ENCODE measurements at regions of chr2 and their contacts with region 1.

Region 1: DNA sequence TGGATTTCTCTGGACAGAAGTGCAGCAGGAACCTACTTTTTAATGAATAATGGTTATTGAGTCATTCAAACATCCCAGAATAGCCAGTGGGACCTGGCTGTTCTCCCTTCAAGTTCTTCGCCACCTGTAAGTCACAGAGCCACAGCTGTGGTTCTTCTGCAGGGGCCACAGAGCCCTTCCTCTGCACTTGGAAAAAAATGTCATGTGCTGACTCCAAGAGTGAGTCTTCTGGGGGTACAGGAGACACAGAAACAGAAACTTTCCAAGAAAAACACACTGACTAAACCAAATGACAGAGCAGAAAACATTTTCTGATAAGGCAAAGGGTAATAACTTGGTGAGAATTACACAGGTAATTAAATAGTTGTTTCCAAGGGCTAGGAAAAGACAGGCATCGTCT is 68.7 kb upstream of the FN1 start:
- DNase-seq: peak; percentile 61
- H3K4me3 ChIP-seq: no peak overlapping the region
- H3K27ac ChIP-seq: no peak overlapping the region
- H3K4me1 ChIP-seq: peaks cover 31% of the 10 kb centered on the region
- H3K27me3 ChIP-seq: no peaks in the 10 kb centered on the region
- CTCF ChIP-seq: no peak
- POLR2A ChIP-seq: no peak

Region 2: GRCh38 chr2:215466097-215466909 is 38.2 kb before region 1 on chr2:
- CTCF ChIA-PET with region 1: no interaction called
- POLR2A ChIA-PET with region 1: no interaction called
- dilution Hi-C with region 1: no loop called
- intact Hi-C with region 1: loop called (anchors 5 kb)
- DNase-seq: no peak
- H3K4me3 ChIP-seq: no peak overlapping the region
- H3K27ac ChIP-seq: no peak overlapping the region
- H3K4me1 ChIP-seq: peaks cover 26% of the 10 kb centered on the region
- H3K27me3 ChIP-seq: no peaks in the 10 kb centered on the region
- CTCF ChIP-seq: no peak
- POLR2A ChIP-seq: no peak

Measured in endothelial cell of umbilical vein (primary cell).